Dorsolateral prefrontal cortex (tissue), 120 donors: ENCODE measurements at regions of chr13 and their contacts with region 1.

Region 1: GRCh38 chr13:105139380-105140285 is 1395.8 kb downstream of the EFNB2 start:
- DNase-seq: peak in 9 of 10 donors; percentile 23 to 63 (median 55)
- H3K4me3 ChIP-seq: peak overlapping the region in 56 of 59 donors; percentile 7 to 64 (median 44)
- H3K27ac ChIP-seq: peak overlapping the region in 56 of 59 donors; percentile 0 to 88 (median 70)
- H3K27me3 ChIP-seq: no peaks in the 10 kb centered on the region
- CTCF ChIP-seq: peak in 28 of 56 donors; percentile 14 to 39 (median 26)

Region 2: DNA sequence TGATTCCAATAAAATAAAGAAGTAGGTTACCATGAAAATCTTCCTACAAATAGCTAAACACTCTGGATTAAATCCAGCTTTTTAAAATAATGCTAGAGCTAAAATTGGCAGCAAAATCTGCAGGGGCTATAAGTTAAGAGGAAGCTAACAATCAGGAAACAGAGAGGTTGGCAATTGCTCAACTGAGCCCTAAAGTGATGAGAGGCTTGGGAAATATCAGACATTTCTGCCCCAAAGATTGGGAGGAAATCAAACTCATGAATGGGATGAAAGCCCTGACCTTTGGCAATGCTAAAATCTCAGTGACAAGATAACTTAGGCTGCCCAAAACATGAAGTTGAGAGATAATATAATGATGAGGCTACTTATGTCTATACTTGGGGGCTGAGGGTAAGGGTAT is 42.1 kb before region 1 on chr13:
- intact Hi-C with region 1: no loop called
- DNase-seq: no peak
- H3K4me3 ChIP-seq: no peak overlapping the region
- H3K27ac ChIP-seq: no peak overlapping the region
- H3K27me3 ChIP-seq: no peaks in the 10 kb centered on the region
- CTCF ChIP-seq: no peak

Region 3: DNA sequence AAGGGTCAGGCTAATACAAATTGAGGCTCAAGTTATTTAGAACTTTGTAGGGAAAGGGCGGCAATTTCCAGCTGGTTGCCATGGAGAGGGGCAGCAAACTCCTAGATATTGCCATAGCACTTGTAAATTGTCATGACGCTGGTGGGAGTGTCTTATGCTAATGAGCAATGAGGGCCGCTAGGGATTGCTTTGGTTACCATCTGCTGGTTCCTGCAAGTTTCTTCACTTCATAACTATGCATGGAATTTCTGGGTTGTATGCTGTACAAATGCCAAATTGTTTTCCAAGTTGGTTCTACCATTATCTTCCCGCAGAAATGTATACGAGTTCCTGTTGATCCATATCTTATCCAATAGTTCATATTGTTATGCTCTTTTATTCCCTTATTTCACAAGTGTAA is 56.4 kb after region 1 on chr13:
- intact Hi-C with region 1: loop called in 1 of 2 experiments (anchors 10 kb)
- DNase-seq: no peak
- H3K4me3 ChIP-seq: no peak overlapping the region
- H3K27ac ChIP-seq: no peak overlapping the region
- H3K27me3 ChIP-seq: no peaks in the 10 kb centered on the region
- CTCF ChIP-seq: no peak

Region 4: GRCh38 chr13:105804561-105805190 is 665.0 kb after region 1 on chr13:
- intact Hi-C with region 1: no loop called
- DNase-seq: peak in 4 of 10 donors; percentile 19 to 58 (median 48)
- H3K4me3 ChIP-seq: peak overlapping the region in 4 of 59 donors; percentile 6 to 24 (median 20)
- H3K27ac ChIP-seq: peak overlapping the region in 26 of 59 donors; percentile 1 to 83 (median 42)
- H3K27me3 ChIP-seq: no peaks in the 10 kb centered on the region
- CTCF ChIP-seq: no peak